Natural killer cell (primary cell): ENCODE measurements at regions of chr9 and their contacts with region 1.

Region 1: GRCh38 chr9:126398403-126399058 is 71.9 kb downstream of the MVB12B start:
- DNase-seq: peak; percentile 73 to 85
- ATAC-seq: peak; percentile 59 to 75 (median 73)
- H3K4me3 ChIP-seq: no peak overlapping the region
- H3K4me3 Mint-ChIP-seq: no peak overlapping the region
- H3K27ac ChIP-seq: no peak overlapping the region
- H3K27ac Mint-ChIP-seq: no peak overlapping the region
- H3K4me1 ChIP-seq: peaks cover 26% of the 10 kb centered on the region
- H3K4me1 Mint-ChIP-seq: peaks cover 5 to 15% of the 10 kb centered on the region in 2 donors
- H3K27me3 ChIP-seq: no peaks in the 10 kb centered on the region
- H3K27me3 Mint-ChIP-seq: peaks cover 0 to 8% of the 10 kb centered on the region in 2 donors
- CTCF ChIP-seq: peak; percentile 98

Region 2: DNA sequence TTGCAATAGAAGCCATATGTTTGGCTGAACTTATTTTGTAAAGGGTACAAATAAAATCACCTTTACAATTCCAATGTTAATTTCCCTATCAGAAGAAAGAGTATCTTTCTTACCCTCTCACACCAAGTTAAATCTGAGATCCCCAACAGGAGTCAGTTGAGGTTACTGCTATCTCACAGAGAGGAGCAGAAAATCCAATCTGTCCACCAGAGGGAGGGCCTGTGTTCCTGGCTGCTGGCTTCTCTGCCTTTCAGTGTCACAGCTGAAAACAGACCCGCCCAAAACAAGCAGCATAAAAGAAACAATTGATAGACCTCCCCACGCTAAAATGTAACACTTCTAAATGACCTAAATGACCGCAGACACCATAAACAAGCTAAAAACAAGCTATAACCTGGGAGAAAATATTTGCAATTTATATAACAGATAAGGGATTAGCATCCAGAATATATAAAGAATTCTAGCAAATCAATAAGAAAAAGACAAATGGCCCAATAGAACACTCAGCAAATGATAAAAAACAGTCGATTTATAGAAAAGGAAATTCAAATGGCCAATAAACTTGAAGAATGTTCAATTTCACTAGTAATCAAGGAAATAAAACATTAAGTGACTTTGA is 96.4 kb before region 1 on chr9:
- intact Hi-C with region 1: loop called (anchors 1 kb)
- DNase-seq: peak in 1 of 2 donors; percentile 80
- ATAC-seq: peak; percentile 57 to 72 (median 58)
- H3K4me3 ChIP-seq: no peak overlapping the region
- H3K4me3 Mint-ChIP-seq: no peak overlapping the region
- H3K27ac ChIP-seq: no peak overlapping the region
- H3K27ac Mint-ChIP-seq: no peak overlapping the region
- H3K4me1 ChIP-seq: no peaks in the 10 kb centered on the region
- H3K4me1 Mint-ChIP-seq: peaks cover 0 to 6% of the 10 kb centered on the region in 2 donors
- H3K27me3 ChIP-seq: no peaks in the 10 kb centered on the region
- H3K27me3 Mint-ChIP-seq: peaks cover 0 to 3% of the 10 kb centered on the region in 2 donors
- CTCF ChIP-seq: peak; percentile 38

Region 3: GRCh38 chr9:126326228-126327005 is 72.1 kb before region 1 on chr9 and contains the start of gene MVB12B:
- intact Hi-C with region 1: loop called (anchors 5 kb)
- DNase-seq: peak; percentile 47 to 76
- ATAC-seq: peak; percentile 76 to 90 (median 85)
- H3K4me3 ChIP-seq: peak within 1 kb of the TSS; percentile 52
- H3K4me3 Mint-ChIP-seq: peak within 1 kb of the TSS; percentile 85
- H3K27ac ChIP-seq: peak within 1 kb of the TSS; percentile 53
- H3K27ac Mint-ChIP-seq: peak within 1 kb of the TSS; percentile 38 to 66
- H3K4me1 ChIP-seq: peaks cover 26% of the 10 kb centered on the region
- H3K4me1 Mint-ChIP-seq: peaks cover 9 to 15% of the 10 kb centered on the region in 2 donors
- H3K27me3 ChIP-seq: no peaks in the 10 kb centered on the region
- H3K27me3 Mint-ChIP-seq: peaks cover 0 to 20% of the 10 kb centered on the region in 2 donors
- CTCF ChIP-seq: no peak
- total RNA-seq, gene MVB12B: 2.0 to 13.0 (median 7.8) TPM